ENCODE measurements at regions of chr3 and their contacts with region 1.

Region 1: DNA sequence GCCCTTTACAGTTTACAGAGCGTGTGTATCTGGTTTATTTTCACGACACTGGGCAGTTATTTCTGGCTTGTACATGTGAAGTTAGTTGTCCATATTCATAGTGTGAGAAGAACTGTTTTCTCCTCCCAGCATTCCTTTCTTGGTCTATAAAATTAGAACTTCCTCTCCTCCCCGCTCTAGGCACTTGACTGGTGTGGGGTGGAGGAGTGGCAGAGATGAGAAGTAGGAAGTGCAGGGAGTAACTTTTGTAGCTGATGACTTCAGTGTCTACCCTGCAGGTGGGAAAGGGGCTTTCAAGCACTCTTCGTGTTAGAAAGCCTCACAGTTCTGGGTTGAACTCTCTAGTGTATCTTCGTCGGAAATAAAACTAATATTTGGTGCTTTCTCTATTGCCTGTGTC is 13.4 kb downstream of the APOD start:
- DNase-seq: no peak
- H3K4me3 ChIP-seq: no peak overlapping the region
- H3K27ac ChIP-seq: no peak overlapping the region
- H3K4me1 ChIP-seq: no peaks in the 10 kb centered on the region
- H3K27me3 ChIP-seq: no peaks in the 10 kb centered on the region
- CTCF ChIP-seq: no peak
- EP300 ChIP-seq: no peak
- POLR2A ChIP-seq: no peak

Region 2: DNA sequence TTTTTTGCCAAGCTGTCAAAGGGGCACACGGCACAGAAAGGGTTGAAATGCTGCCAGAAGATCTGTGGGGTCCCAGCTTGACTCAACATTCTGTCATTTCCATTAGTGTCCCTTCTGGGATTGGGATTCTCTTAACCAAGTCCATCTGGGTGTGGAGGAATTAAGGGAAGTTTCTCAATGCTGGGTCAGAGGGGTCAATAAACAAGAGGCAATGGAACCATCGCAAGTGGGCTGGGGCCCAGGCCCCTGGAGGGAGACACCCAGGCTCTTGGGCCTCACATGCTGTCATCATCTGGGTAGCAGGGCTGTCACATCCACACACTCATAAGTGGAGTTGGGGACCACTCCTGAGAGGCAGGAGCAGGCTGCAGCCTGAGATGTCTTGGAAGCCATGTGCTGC is 21.5 kb after region 1 on chr3:
- intact Hi-C with region 1: loop called in 1 of 4 experiments (anchors 2 kb)
- DNase-seq: no peak
- H3K4me3 ChIP-seq: no peak overlapping the region
- H3K27ac ChIP-seq: no peak overlapping the region
- H3K4me1 ChIP-seq: no peaks in the 10 kb centered on the region
- H3K27me3 ChIP-seq: no peaks in the 10 kb centered on the region
- CTCF ChIP-seq: no peak
- EP300 ChIP-seq: no peak
- POLR2A ChIP-seq: no peak

Region 3: GRCh38 chr3:197541756-197542539 is 1971.6 kb after region 1 on chr3:
- intact Hi-C with region 1: loop called in 1 of 4 experiments (anchors 5 kb)
- DNase-seq: peak in 4 of 5 donors; percentile 46 to 72 (median 51)
- H3K4me3 ChIP-seq: no peak overlapping the region
- H3K27ac ChIP-seq: no peak overlapping the region
- H3K4me1 ChIP-seq: no peaks in the 10 kb centered on the region
- H3K27me3 ChIP-seq: no peaks in the 10 kb centered on the region
- CTCF ChIP-seq: no peak
- EP300 ChIP-seq: no peak
- POLR2A ChIP-seq: no peak

Measured in ovary (tissue), 10 donors.